PC-9 (cell line): ENCODE measurements at regions of chr20 and their contacts with region 1.

Region 1: GRCh38 chr20:11274141-11274594 is 600.4 kb upstream of the JAG1 start:
- DNase-seq: peak; percentile 30 to 61
- H3K4me3 ChIP-seq: no peak overlapping the region
- H3K27ac ChIP-seq: no peak overlapping the region
- H3K4me1 ChIP-seq: peaks cover 3% of the 10 kb centered on the region; the same call in 1 of the 2 replicates
- H3K27me3 ChIP-seq: no peaks in the 10 kb centered on the region
- CTCF ChIP-seq: peak; percentile 76

Region 2: DNA sequence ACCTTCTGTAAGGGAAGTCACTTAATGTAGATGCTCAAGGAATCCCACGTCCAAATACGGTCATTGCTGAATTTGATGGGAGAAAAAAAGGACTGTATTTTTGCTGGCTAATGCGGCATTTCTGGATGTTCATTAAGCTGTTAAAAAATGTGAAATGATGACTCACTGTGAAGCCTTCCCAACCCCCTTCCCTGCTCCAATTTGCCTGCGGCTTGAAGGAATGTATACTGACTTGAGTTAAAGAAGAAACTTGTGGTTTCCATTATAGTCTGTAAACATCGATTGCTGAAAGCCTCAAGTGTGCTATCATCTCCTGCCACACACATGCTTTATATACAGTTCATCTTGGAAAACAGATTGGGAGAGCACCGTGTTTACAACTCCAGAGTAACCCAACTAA is 351.2 kb before region 1 on chr20:
- CTCF ChIA-PET with region 1: no interaction called
- POLR2A ChIA-PET with region 1: no interaction called
- intact Hi-C with region 1: loop called (anchors 5 kb)
- DNase-seq: peak; percentile 59 to 82
- H3K4me3 ChIP-seq: no peak overlapping the region
- H3K27ac ChIP-seq: peak overlapping the region; percentile 50
- H3K4me1 ChIP-seq: peaks cover 48% of the 10 kb centered on the region
- H3K27me3 ChIP-seq: no peaks in the 10 kb centered on the region
- CTCF ChIP-seq: no peak

Region 3: GRCh38 chr20:11235058-11235457 is 39.1 kb before region 1 on chr20:
- CTCF ChIA-PET with region 1: no interaction called
- POLR2A ChIA-PET with region 1: no interaction called
- intact Hi-C with region 1: no loop called
- DNase-seq: no peak
- H3K4me3 ChIP-seq: no peak overlapping the region
- H3K27ac ChIP-seq: no peak overlapping the region
- H3K4me1 ChIP-seq: peaks cover 10% of the 10 kb centered on the region
- H3K27me3 ChIP-seq: no peaks in the 10 kb centered on the region
- CTCF ChIP-seq: no peak

Region 4: GRCh38 chr20:11350126-11351005 is 76.2 kb after region 1 on chr20:
- CTCF ChIA-PET with region 1: no interaction called
- POLR2A ChIA-PET with region 1: no interaction called
- intact Hi-C with region 1: no loop called
- DNase-seq: no peak
- H3K4me3 ChIP-seq: no peak overlapping the region
- H3K27ac ChIP-seq: no peak overlapping the region
- H3K4me1 ChIP-seq: no peaks in the 10 kb centered on the region
- H3K27me3 ChIP-seq: no peaks in the 10 kb centered on the region
- CTCF ChIP-seq: no peak